PC-9 (cell line): ENCODE measurements at regions of chr11 and their contacts with region 1.

Region 1: GRCh38 chr11:7892840-7893254 is 38.2 kb downstream of the OR10A6 start:
- DNase-seq: peak in 1 of 2 experiments; percentile 43
- H3K4me3 ChIP-seq: no peak overlapping the region
- H3K27ac ChIP-seq: no peak overlapping the region
- H3K4me1 ChIP-seq: 0 out of 2 replicates have a peak, but pooled peaks cover 10% of the 10 kb centered on the region
- H3K27me3 ChIP-seq: no peaks in the 10 kb centered on the region
- CTCF ChIP-seq: peak; percentile 73

Region 2: GRCh38 chr11:7965386-7965785 is 72.5 kb after region 1 on chr11 and contains the start of gene NLRP10:
- CTCF ChIA-PET with region 1: no interaction called
- POLR2A ChIA-PET with region 1: no interaction called
- intact Hi-C with region 1: no loop called
- DNase-seq: peak in 1 of 2 experiments; percentile 9
- H3K4me3 ChIP-seq: no peak within 1 kb of the TSS
- H3K27ac ChIP-seq: peak within 1 kb of the TSS; percentile 39; the same call in 1 of the 2 replicates
- H3K4me1 ChIP-seq: peaks cover 14% of the 10 kb centered on the region
- H3K27me3 ChIP-seq: no peaks in the 10 kb centered on the region
- CTCF ChIP-seq: no peak
- total RNA-seq, gene NLRP10: 0.96 and 1.6 TPM in 2 replicates

Region 3: DNA sequence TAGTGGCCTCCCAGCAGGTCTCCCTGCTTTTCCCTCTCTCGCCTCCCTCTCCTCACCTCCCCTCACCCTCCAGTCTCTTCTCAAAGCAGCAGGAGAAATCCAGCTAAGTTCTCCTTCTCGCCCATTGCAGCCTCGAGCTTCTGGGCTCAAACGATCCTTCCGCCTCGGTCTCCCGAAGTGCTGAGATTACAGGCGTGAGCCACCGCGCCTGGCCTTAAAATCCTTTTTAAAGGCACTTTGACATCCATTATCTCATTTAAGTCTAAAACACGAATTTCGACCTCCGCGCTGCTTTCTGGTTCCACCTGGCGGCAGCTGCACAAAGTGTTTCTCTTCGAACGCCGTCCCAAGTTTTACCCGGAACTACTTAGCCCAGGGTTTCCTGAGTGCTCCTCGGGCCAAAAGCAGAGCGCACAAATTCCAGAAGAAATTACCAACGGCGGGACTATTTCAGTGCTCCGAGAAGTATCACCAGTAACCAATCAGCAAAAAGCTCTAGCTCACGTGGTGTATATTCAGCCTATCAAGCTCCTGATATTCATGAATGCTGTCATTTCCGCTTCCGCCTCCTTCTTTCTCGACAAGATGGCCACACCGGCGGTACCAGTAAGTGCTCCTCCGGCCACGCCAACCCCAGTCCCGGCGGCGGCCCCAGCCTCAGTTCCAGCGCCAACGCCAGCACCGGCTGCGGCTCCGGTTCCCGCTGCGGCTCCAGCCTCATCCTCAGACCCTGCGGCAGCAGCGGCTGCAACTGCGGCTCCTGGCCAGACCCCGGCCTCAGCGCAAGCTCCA is 94.1 kb after region 1 on chr11 and contains the start of gene EIF3F:
- CTCF ChIA-PET with region 1: interaction called, 8 read pairs
- POLR2A ChIA-PET with region 1: interaction called, 4 read pairs
- intact Hi-C with region 1: loop called (anchors 1 kb)
- DNase-seq: peak; percentile 84 to 97
- H3K4me3 ChIP-seq: peak within 1 kb of the TSS; percentile 91
- H3K27ac ChIP-seq: peak within 1 kb of the TSS; percentile 33; the same call in 1 of the 2 replicates
- H3K4me1 ChIP-seq: peaks cover 23% of the 10 kb centered on the region
- H3K27me3 ChIP-seq: no peaks in the 10 kb centered on the region
- CTCF ChIP-seq: peak; percentile 80
- total RNA-seq, gene EIF3F: 191 and 195 TPM in 2 replicates

Region 4: DNA sequence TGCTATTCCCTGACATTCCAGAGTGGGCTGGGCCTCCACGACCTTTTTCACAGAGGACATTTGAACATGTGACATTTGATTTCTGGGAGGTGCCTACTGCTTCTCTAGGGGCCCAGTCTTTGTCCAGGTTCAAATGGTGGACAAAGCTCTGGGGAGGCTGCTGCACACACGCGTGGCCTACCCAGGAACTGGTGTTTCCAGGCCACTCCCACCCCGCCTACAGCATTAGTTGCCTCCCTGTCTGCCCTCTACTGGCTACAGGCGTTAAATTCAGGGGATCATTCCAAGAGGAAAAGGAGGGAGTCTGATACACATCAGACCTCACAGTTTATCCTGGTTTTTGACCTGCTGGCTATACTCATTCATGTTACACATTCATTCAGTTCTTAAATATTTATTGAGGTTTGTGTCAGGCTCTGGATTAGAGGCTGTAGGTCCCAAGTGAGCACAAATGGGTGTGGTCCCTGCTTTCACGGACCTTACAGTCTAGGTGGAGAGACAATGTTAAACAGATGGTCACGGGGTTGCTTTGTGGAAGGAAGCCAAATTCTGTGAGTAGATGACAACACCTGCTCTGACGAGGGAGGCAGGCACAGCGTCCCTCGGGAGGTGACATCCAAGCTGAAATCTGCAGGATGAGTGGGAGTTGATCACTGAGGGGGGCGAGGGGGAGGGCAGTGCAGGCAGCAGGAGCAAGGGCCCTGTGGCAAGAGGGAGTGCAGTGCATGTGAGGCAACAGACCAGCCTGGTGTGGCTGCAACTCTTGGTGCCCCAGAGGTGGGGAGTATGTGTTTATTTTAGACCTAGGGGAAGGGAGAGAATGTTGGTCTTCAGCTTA is 200.0 kb after region 1 on chr11:
- CTCF ChIA-PET with region 1: no interaction called
- POLR2A ChIA-PET with region 1: no interaction called
- intact Hi-C with region 1: loop called (anchors 1 kb)
- DNase-seq: peak in 1 of 2 experiments; percentile 31
- H3K4me3 ChIP-seq: no peak overlapping the region
- H3K27ac ChIP-seq: no peak overlapping the region
- H3K4me1 ChIP-seq: no peaks in the 10 kb centered on the region
- H3K27me3 ChIP-seq: no peaks in the 10 kb centered on the region
- CTCF ChIP-seq: peak; percentile 58